ENCODE measurements at regions of chr1 and their contacts with region 1.

Region 1: DNA sequence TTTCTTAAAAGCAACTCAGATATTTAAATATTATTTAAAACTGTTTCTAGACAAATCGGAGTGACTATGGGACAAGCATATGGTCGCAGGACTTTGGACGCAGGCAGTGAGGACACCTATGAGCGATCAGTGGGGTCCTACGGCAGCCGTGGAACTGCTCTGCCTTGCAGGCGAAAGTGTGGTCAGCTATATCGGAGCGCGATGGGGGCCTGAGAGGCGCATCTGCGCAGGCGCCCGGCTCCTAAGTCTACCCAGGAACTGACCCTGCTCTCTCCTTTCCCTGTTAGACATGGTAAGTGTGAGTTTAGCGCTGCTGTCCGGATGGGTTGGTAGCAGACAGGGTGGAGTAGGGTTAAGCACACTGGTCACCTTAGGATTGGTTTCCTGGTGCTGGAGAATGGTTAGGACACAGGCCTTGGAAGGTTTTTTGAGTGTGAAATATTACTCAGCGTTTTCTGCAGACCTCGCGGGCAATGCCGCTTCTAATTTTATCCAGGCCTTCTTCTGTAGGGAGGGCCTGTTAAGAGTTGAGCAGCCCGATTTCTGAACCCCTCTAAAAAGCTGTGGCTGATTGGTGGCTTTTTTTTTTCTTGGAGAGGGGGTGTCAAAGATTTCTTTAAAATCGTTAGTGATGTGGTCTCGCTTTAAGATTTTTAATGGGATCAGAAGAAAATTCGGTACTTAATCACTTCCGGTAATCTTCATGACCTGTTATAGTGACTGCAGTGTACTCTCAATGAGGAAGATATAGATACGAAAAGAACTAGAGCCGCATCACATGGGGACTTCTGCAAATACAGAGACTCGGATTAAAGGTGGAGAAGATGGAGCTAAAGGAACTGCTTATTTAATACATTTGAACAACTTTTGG is at the start of gene RABGGTB:
- DNase-seq: peak; percentile 93
- H3K4me3 Mint-ChIP-seq: peak within 1 kb of the TSS; percentile 100
- H3K27ac Mint-ChIP-seq: peak within 1 kb of the TSS; percentile 97
- H3K4me1 Mint-ChIP-seq: peaks cover 37% of the 10 kb centered on the region
- H3K27me3 Mint-ChIP-seq: peaks cover 4% of the 10 kb centered on the region
- total RNA-seq, gene RABGGTB: 219 and 230 TPM in 2 replicates

Region 2: DNA sequence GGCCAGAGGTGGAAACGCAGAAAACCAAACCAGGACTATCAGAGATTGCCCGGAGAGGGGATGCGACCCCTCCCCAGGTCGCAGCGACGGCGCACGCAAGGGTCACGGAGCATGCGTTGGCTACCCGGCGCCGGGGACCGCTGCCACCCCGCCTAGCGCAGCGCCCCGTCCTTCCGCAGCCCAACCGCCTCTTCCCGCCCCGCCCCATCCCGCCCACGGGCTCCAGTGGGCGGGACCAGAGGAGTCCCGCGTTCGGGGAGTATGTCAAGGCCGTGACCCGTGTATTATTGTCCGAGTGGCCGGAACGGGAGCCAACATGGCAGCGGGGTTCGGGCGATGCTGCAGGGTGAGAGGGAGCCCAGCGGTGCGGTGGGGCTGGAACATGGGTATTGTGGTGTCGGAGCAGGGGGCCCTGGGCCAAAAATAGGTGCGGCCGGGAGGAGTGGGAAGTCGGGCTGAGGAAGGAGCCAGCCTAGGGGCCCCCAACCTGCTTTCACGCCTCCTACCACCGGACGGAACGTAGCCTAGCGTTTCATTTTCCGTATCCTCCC is 61.7 kb before region 1 on chr1 and contains the start of gene ACADM:
- intact Hi-C with region 1: loop called (anchors 1 kb)
- DNase-seq: peak; percentile 80
- H3K4me3 Mint-ChIP-seq: peak within 1 kb of the TSS; percentile 97
- H3K27ac Mint-ChIP-seq: peak within 1 kb of the TSS; percentile 95
- H3K4me1 Mint-ChIP-seq: peaks cover 26% of the 10 kb centered on the region
- H3K27me3 Mint-ChIP-seq: peaks cover 4% of the 10 kb centered on the region
- total RNA-seq, gene ACADM: 58.4 and 60.5 TPM in 2 replicates

Region 3: GRCh38 chr1:75796376-75797272 is 10.4 kb after region 1 on chr1 and contains the start of gene MSH4:
- intact Hi-C with region 1: loop called (anchors 1 kb)
- DNase-seq: no peak
- H3K4me3 Mint-ChIP-seq: no peak within 1 kb of the TSS
- H3K27ac Mint-ChIP-seq: peak within 1 kb of the TSS; percentile 19
- H3K4me1 Mint-ChIP-seq: peaks cover 11% of the 10 kb centered on the region
- H3K27me3 Mint-ChIP-seq: no peaks in the 10 kb centered on the region
- total RNA-seq, gene MSH4: 0.60 and 0.62 TPM in 2 replicates

Region 4: DNA sequence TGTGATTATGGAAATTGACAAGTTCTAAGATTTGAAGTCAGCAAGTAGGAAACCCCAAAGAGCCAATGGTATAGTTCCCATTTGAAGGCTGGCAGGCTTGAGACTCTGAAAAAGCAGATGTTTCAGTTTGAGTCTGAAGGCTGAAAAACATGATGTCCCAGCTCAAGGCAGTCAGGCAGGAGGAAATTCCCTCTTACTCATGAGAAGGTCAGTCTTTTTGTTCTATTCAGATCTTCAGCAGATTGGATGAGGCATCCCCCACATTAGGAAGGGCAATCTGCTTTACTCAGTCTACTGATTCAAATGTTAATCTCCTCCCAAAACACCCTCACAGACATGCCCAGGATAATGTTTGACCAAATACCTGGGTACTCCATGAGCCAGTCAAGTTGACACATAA is 708.6 kb after region 1 on chr1:
- intact Hi-C with region 1: loop called (anchors 5 kb)
- DNase-seq: no peak
- H3K4me3 Mint-ChIP-seq: peak overlapping the region; percentile 35
- H3K27ac Mint-ChIP-seq: peak overlapping the region; percentile 70
- H3K4me1 Mint-ChIP-seq: peaks cover 21% of the 10 kb centered on the region
- H3K27me3 Mint-ChIP-seq: peaks cover 3% of the 10 kb centered on the region